ENCODE measurements at regions of chr2 and their contacts with region 1.

Region 1: DNA sequence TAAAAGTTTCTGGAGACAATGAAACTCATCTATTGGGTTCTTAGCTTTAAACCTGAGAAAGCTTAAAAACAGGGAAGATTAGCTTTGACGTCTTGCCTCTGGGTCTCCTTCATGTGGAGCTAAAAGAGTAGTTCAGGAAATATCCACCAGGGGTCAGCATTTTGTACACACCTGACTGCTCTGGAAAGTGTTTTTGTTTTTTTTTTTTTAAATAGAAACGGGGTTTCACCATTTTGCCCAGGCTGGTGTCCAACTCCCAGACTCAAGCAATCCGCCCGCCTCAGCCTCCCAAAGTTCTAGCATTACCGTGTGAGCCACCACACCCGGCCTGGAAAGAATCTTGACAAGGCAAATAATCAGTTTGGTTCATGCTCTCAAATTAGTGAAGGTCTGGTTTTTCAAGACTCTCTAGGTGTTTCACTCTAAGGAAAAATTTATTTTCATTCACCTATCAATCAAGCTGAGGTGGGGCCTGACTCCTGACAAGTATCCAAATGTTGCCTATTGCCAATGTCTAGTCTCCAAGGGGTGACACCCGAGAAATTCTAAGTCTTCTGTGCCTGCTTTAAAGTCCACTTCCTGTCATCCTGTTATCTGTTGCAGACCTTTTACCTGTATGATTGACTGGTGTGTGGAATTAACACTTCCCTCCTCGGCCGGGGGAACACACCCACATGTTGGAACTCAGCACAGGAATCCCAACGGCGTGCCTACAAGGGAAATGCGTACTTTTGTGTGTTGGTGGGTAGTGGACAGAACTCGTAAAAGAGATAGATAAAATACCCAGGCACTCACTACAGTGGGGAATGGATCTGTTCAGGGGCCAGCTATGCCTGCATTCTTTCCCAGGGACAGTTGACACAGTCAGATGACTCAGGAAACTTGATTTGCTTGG is 11.3 kb downstream of the IL1RN start:
- DNase-seq: peak; percentile 67 to 83 (median 78)
- ATAC-seq: peak; percentile 90
- H3K4me3 ChIP-seq: no peak overlapping the region
- H3K27ac ChIP-seq: no peak overlapping the region
- H3K4me1 ChIP-seq: peaks cover 0 to 5% of the 10 kb centered on the region in 2 experiments; a peak in 2 of 5 replicates
- H3K27me3 ChIP-seq: 0 out of 5 replicates have a peak, but pooled peaks cover 2 to 4% of the 10 kb centered on the region in 2 experiments
- CTCF ChIP-seq: peak; percentile 71 to 87 (median 78)
- EP300 ChIP-seq: no peak
- POLR2A ChIP-seq: no peak
- RAD21 ChIP-seq: peak; percentile 50 to 68

Region 2: DNA sequence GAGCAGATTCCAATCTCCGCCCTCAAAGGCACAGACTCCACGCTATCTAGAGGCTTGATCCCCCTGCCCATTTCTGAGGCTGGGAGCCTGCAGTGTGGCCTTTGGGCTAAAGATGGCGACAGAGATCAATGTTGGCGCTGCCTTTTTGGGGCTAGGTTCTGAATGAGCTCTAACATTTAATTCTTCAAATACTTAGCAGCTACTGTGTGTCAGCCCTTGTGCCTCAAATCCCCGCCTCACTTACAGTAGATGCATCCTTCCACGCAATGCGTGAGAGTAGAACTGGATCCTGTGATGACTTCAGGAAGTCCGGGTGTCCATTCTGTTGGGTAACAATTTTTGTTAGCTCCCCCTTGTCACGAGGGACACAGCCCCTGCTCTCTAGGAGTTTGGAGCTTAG is 58.5 kb before region 1 on chr2:
- CTCF ChIA-PET with region 1: interaction called, 3 read pairs
- POLR2A ChIA-PET with region 1: no interaction called
- in situ Hi-C with region 1: no loop called
- intact Hi-C with region 1: loop called (anchors 2 kb)
- DNase-seq: peak; percentile 60 to 64 (median 62)
- ATAC-seq: peak; percentile 97
- H3K4me3 ChIP-seq: no peak overlapping the region
- H3K27ac ChIP-seq: no peak overlapping the region
- H3K4me1 ChIP-seq: no peaks in the 10 kb centered on the region
- H3K27me3 ChIP-seq: peaks cover 2 to 14% of the 10 kb centered on the region in 2 experiments; a peak in 4 of 5 replicates
- CTCF ChIP-seq: peak; percentile 93 to 96 (median 96)
- EP300 ChIP-seq: no peak
- POLR2A ChIP-seq: no peak
- RAD21 ChIP-seq: peak; percentile 88 to 90

Region 3: DNA sequence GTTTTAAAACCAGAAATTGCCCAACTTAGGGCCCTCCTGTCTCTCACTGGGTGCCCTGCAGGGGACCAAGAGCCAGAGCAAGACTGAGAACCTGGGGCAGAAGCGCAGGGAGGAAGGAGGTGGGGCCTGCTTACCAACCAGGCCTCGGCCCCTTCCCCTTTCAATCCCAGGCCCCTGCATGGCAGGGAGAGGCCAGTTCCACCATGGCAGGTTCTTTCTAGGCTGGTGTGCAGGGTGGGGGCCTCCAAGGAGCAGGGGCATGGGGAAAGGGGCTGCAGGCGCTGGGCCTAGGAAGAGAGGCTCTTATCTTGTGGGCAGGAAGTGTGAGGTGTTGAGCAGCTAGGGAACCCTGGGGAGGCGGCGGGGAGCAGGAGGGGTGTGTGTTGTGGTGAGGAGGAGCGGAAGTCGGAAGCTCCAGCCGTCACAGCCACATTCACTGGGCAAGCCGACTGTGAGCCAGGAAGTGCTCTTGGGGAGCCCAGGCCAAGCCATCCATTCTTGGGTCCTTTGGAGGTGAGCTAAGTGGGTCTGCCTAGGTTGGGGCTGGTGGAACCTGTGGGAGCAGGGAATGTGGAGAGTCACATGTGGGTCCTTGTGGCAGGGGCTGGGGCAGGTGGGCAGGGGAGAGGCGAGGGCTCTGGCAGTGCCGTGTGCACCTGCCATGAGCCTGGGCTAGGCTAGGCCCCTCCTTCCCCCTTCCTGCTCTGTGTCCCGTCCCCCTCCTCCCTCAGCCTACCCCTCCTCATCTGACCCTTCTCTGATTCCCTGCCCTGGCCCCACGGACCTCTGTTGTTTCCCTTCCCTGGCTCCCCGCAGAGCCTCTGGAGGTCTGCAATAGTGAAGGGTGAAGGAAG is 35.1 kb after region 1 on chr2 and contains the start of gene PSD4:
- CTCF ChIA-PET with region 1: no interaction called
- POLR2A ChIA-PET with region 1: interaction called, 4 read pairs
- in situ Hi-C with region 1: no loop called
- intact Hi-C with region 1: loop called (anchors 5 kb)
- DNase-seq: peak; percentile 78 to 92 (median 86)
- ATAC-seq: peak; percentile 97
- H3K4me3 ChIP-seq: peak within 1 kb of the TSS; percentile 70
- H3K27ac ChIP-seq: peak within 1 kb of the TSS; percentile 83
- H3K4me1 ChIP-seq: peaks cover 20 to 26% of the 10 kb centered on the region in 2 experiments
- H3K27me3 ChIP-seq: no peaks in the 10 kb centered on the region
- CTCF ChIP-seq: no peak
- EP300 ChIP-seq: peak; percentile 31; the same call in 1 of the 2 replicates
- POLR2A ChIP-seq: peak; percentile 88
- RAD21 ChIP-seq: 0 out of 4 replicates have a peak, but pooled peaks of 1 of the 2 experiments have one; percentile 10
- polyA plus RNA-seq, gene PSD4: 0.46 to 0.52 TPM

Region 4: GRCh38 chr2:113203901-113204519 is 65.3 kb after region 1 on chr2:
- CTCF ChIA-PET with region 1: no interaction called
- POLR2A ChIA-PET with region 1: interaction called, 3 read pairs
- in situ Hi-C with region 1: no loop called
- intact Hi-C with region 1: loop called (anchors 5 kb)
- DNase-seq: peak; percentile 80 to 82 (median 80)
- ATAC-seq: peak; percentile 97
- H3K4me3 ChIP-seq: no peak overlapping the region
- H3K27ac ChIP-seq: no peak overlapping the region
- H3K4me1 ChIP-seq: no peaks in the 10 kb centered on the region
- H3K27me3 ChIP-seq: peaks cover 2 to 13% of the 10 kb centered on the region in 2 experiments; a peak in 3 of 5 replicates
- CTCF ChIP-seq: peak; percentile 88 to 95 (median 92)
- EP300 ChIP-seq: no peak
- POLR2A ChIP-seq: no peak
- RAD21 ChIP-seq: peak; percentile 83 to 88

Region 5: DNA sequence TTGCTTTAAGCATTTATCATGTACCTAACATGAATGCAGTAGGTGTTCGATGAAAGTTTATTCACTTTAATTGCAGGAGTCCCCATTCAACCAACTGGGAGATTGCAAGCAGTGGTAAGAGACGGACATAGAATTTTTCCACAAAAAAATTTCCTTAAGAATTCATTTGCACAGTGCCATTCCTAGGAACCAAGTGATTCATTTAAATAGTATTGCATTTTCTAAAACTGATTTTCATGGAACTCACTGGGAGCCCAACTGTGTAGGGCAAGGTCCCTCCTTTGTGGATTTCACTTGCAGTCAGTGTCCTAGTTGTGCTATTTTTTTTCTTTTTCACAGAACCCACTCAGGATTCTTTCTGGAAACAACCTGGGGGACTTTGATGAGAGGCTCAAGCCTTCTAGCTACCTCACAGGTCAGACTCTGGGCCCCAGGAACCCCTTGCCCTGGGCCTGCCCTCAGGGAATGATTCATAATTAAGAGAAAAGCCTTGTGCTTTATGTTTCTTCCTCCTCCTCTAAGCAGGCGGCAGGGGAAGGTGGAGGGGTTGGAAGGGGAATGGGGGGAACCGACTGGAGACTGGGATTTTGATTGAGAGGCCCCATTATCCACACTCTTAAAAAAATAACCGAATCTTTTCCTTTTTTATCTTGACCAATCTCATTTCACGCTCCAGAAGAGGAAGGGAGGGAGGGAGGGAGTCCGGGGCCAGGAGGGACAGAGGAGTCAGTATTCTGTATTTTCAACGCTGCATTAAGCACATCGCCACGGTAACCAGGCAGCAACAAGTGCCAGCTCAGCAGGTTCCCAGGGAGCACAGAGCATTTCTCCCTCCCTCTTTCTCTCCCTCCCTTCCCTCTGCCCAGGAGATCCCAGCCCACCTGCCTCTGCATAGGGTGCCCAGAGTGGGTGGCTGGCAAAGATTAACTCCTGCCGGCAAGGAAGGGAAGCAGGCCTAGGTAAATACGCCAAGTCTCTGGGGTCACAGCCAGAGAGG is 86.9 kb after region 1 on chr2:
- CTCF ChIA-PET with region 1: interaction called, 3 read pairs
- POLR2A ChIA-PET with region 1: no interaction called
- in situ Hi-C with region 1: no loop called
- intact Hi-C with region 1: loop called (anchors 5 kb)
- DNase-seq: no peak
- ATAC-seq: no peak
- H3K4me3 ChIP-seq: no peak overlapping the region
- H3K27ac ChIP-seq: no peak overlapping the region
- H3K4me1 ChIP-seq: peaks cover 0 to 3% of the 10 kb centered on the region in 2 experiments; a peak in 1 of 5 replicates
- H3K27me3 ChIP-seq: 0 out of 5 replicates have a peak, but pooled peaks cover 0 to 4% of the 10 kb centered on the region in 2 experiments
- CTCF ChIP-seq: no peak
- EP300 ChIP-seq: no peak
- POLR2A ChIP-seq: no peak
- RAD21 ChIP-seq: no peak

Region 6: DNA sequence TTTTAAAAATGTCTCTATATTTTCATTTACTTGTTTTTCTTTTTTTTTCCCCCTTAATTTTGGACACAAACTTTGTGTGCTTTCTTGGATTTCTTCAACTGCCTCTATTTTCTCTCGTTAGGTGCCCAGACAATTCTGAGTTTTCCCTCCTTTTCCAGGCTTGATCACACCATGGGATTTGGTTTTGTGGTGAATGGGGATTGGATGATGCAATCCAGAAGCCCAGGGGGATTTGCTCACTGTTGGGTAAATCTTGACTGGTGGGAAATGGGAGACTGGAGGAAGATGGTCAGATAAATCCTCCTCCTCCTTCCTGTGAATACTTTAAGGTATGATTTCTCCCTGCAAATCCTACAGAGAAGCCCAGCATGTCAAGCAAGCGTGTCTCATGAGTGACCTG is 159.5 kb after region 1 on chr2:
- CTCF ChIA-PET with region 1: no interaction called
- POLR2A ChIA-PET with region 1: no interaction called
- in situ Hi-C with region 1: no loop called
- intact Hi-C with region 1: no loop called
- DNase-seq: no peak
- ATAC-seq: no peak
- H3K4me3 ChIP-seq: no peak overlapping the region
- H3K27ac ChIP-seq: no peak overlapping the region
- H3K4me1 ChIP-seq: no peaks in the 10 kb centered on the region
- H3K27me3 ChIP-seq: peaks cover 0 to 17% of the 10 kb centered on the region in 2 experiments; a peak in 3 of 5 replicates
- CTCF ChIP-seq: no peak
- EP300 ChIP-seq: no peak
- POLR2A ChIP-seq: no peak
- RAD21 ChIP-seq: no peak

Region 7: DNA sequence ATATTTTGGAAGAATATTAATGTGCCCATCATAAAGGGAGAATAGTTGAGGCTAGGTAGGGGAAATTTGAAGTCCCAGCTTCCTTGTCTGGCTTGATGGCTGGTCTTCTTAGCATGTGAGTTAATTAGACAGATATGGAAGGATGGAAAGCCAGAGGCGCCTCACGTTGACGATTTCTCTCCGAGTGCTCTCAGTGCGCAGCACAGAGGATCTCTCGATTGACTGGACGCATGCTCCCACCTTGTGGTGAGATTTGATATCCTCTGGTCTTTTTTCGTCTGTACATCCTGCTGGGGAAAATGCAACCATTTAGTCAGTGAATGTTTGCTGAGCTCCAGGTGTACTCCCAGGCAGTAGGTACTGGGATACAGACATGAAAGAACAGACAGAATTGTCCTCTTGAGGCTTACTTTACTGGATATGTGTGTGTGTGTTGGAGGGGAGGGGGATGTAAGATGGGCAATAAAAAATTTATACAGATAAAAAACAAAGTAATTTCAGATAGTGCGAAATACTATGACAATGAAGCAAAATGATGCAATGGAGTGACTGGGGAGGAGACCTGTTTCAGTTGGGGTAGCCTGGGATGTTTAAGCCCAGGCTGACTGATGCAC is 231.9 kb after region 1 on chr2:
- CTCF ChIA-PET with region 1: interaction called, 5 read pairs
- POLR2A ChIA-PET with region 1: no interaction called
- in situ Hi-C with region 1: loop called (anchors 5 kb)
- intact Hi-C with region 1: loop called (anchors 1 kb)
- DNase-seq: peak; percentile 41 to 73 (median 46)
- ATAC-seq: peak; percentile 95
- H3K4me3 ChIP-seq: no peak overlapping the region
- H3K27ac ChIP-seq: no peak overlapping the region
- H3K4me1 ChIP-seq: no peaks in the 10 kb centered on the region
- H3K27me3 ChIP-seq: no peaks in the 10 kb centered on the region; a peak in 1 of 5 replicates
- CTCF ChIP-seq: peak; percentile 70 to 80 (median 73)
- EP300 ChIP-seq: no peak
- POLR2A ChIP-seq: no peak
- RAD21 ChIP-seq: peak; percentile 85 to 90

Region 8: GRCh38 chr2:113390124-113390849 is 251.6 kb after region 1 on chr2:
- CTCF ChIA-PET with region 1: interaction called, 30 read pairs
- POLR2A ChIA-PET with region 1: no interaction called
- in situ Hi-C with region 1: no loop called
- intact Hi-C with region 1: loop called (anchors 5 kb)
- DNase-seq: peak; percentile 51 to 71 (median 57)
- ATAC-seq: peak; percentile 90
- H3K4me3 ChIP-seq: no peak overlapping the region
- H3K27ac ChIP-seq: no peak overlapping the region
- H3K4me1 ChIP-seq: no peaks in the 10 kb centered on the region
- H3K27me3 ChIP-seq: no peaks in the 10 kb centered on the region; a peak in 1 of 5 replicates
- CTCF ChIP-seq: peak; percentile 91 to 95 (median 93)
- EP300 ChIP-seq: no peak
- POLR2A ChIP-seq: no peak
- RAD21 ChIP-seq: peak; percentile 23 to 27; a peak in 1 of 4 replicates

Measured in K562 (cell line).